Sciatic nerve (tissue), 2 donors: ENCODE measurements at regions of chr22 and their contacts with region 1.

Region 1: DNA sequence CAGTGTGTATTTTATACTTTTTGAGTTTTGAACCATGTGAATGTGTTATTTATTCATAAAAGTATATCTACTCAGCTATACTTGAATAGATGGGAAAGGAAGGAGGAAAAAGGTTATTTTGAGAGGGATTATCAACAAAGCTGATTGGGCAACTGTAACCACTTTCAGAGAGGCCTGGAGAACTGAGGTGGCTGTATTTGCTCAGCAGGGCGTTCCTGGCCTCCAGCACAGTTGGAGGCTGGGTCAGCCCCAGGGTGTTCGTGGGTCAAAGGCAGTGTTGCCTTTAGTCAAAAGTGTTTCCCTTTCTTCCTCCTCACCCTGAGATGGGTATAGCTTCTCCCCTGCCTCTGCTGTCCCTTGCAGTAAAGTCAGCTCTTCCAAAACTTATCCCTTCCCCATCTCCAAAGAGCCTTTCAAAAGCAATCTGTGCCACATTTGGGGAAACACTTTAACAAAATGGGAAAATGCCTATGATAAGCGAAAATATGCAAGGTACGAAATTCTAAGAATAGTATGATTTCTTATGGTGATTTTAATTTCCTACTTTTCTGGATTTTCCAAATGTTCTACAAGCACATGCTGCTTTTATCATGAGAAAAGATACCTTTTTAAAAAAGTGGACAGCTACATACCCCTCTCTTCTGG is 26.6 kb downstream of the ASCC2 start:
- DNase-seq: no peak
- ATAC-seq: peak; percentile 41

Region 2: DNA sequence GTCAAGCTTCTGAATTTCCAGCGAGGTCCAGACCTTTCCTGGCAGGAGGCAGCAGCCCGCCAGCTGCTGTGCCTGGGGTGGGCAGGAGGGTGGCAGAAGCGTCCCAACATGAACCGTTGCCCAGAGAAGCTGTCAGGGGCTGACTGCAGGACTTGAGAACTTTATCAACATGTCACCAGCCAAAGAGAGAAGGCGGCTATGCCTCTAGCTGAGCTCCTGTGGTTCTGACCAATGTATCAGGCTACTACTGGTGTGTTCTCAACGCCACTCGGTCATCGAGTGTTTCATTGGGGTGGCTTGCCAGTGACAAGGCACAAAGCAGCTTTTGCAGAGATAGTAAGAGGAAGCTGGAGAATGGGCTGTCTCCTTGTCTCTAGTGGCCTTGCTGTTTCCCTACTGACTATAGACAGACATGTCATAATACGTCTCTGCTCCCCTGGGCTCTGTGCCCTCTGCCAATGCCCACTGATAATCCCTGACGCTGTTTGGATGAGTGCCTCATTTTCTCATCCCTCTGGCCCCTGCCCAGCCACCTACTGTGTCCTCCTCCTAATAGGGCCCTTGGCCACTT is 44.2 kb after region 1 on chr22:
- intact Hi-C with region 1: loop called (anchors 2 kb)
- DNase-seq: no peak
- ATAC-seq: no peak